Activated CD8-positive, alpha-beta T cell treated with anti-CD3 and anti-CD28 coated beads, Interleukin-2, amount 10 ng/mL, durations not matched to agents 7 days and 5 days (primary cell): ENCODE measurements at regions of chr11 and their contacts with region 1.

Region 1: DNA sequence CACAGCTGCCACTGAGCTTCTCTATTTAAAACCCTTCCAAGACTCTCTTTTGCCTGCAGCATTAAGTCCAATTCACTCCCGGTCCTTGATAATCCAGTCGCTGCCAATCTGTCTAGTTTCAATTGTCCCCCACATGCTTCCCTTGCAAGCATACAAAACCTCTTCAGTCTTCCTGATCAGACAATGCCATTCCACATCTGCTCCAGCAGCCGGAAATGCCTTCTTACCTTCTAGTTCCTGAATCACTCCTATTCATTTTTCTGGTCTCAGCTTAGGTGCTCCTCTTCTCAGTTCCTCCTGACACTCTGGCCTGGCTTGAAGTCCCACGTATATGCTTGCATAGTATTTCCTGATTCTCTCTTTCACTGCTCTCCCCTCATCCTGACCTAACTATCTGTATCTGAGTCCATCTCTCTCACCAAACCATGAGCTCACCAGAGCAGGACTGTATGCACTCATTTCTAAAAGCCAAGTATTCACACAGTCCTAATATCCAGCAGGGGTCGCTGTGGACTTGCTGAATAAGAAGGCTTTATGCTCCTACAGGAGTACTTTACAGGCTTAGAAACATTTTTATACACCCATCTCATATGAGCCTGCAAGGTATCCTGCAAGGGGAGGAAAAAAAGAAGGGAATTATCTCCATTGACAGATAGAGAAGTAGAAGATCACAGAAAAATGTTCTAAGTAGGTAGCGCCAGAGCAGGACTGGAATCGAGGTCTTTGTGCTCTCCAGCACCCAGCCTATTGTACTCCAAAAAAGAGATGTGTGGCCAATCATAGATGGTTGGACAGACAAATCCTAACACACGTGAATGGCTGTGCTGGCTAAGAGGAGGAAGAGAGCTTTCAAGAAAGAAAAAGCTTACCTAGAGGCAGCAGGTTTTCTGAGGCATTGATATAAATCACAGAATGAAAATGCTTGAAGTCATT is 19.2 kb downstream of the XRRA1 start:
- DNase-seq: peak; percentile 83
- ATAC-seq: peak; percentile 75
- H3K4me3 Mint-ChIP-seq: no peak overlapping the region
- H3K27ac Mint-ChIP-seq: no peak overlapping the region
- H3K4me1 Mint-ChIP-seq: peaks cover 48% of the 10 kb centered on the region
- H3K27me3 Mint-ChIP-seq: no peaks in the 10 kb centered on the region

Region 2: DNA sequence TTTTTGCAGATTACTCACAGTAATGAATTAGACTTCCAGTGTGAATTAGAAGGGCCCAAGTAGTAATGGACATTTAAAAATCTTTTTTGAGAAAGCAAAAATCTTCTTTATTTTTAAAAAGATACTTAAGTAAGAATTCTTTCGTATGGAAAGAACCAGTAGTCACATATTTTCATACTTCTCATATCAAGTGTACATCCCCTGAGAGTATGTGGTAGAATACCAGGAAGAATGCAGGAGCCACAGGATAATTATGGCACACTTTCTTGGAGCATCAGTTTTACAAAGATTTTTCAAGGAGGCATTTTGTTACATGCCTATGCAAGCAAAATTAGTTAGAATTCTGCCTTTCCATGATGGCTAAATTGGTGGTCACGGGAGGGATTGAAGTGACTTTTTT is 309.2 kb before region 1 on chr11:
- CTCF ChIA-PET with region 1: no interaction called
- POLR2A ChIA-PET with region 1: no interaction called
- DNase-seq: no peak
- ATAC-seq: no peak
- H3K4me3 Mint-ChIP-seq: no peak overlapping the region
- H3K27ac Mint-ChIP-seq: no peak overlapping the region
- H3K4me1 Mint-ChIP-seq: no peaks in the 10 kb centered on the region
- H3K27me3 Mint-ChIP-seq: no peaks in the 10 kb centered on the region

Region 3: GRCh38 chr11:74870485-74870884 is 59.2 kb before region 1 on chr11:
- CTCF ChIA-PET with region 1: no interaction called
- POLR2A ChIA-PET with region 1: no interaction called
- DNase-seq: no peak
- ATAC-seq: no peak
- H3K4me3 Mint-ChIP-seq: no peak overlapping the region
- H3K27ac Mint-ChIP-seq: no peak overlapping the region
- H3K4me1 Mint-ChIP-seq: no peaks in the 10 kb centered on the region
- H3K27me3 Mint-ChIP-seq: no peaks in the 10 kb centered on the region

Region 4: GRCh38 chr11:74941308-74941891 is 11.7 kb after region 1 on chr11:
- CTCF ChIA-PET with region 1: interaction called, 21 read pairs
- POLR2A ChIA-PET with region 1: no interaction called
- DNase-seq: no peak
- ATAC-seq: no peak
- H3K4me3 Mint-ChIP-seq: no peak overlapping the region
- H3K27ac Mint-ChIP-seq: no peak overlapping the region
- H3K4me1 Mint-ChIP-seq: peaks cover 3% of the 10 kb centered on the region
- H3K27me3 Mint-ChIP-seq: no peaks in the 10 kb centered on the region

Region 5: DNA sequence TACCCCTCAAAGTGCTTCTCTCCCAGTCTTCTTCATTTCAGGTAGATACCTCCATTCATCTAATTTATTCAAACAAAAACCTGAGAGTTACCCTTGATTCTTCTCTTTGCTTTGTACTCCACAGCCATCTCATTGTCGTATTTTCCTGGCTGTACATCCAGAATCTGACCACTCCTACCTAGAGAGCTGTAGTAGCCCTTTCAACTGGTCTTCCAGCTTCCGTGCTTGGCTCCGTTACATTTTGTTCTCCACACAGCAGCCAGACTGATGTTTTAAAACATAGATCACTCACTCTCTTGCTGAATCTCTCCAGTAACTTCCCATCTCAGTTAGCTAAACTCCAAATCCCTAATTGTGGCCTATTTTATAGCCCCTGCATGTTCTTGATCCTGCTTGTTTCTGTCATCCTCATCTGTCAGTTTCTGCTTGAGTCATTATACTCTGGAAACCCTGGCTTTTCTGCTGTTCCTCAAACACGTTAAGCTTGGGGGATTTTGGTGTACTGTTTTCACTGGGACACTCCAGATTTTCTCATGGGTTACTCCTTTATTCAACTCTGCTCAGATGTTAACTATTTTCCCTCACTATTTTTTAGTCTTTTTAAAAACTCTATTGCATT is 26.8 kb after region 1 on chr11:
- CTCF ChIA-PET with region 1: interaction called, 14 read pairs
- POLR2A ChIA-PET with region 1: no interaction called
- DNase-seq: no peak
- ATAC-seq: no peak
- H3K4me3 Mint-ChIP-seq: no peak overlapping the region
- H3K27ac Mint-ChIP-seq: no peak overlapping the region
- H3K4me1 Mint-ChIP-seq: peaks cover 23% of the 10 kb centered on the region
- H3K27me3 Mint-ChIP-seq: no peaks in the 10 kb centered on the region

Region 6: GRCh38 chr11:74988541-74989260 is 59.0 kb after region 1 on chr11 and contains the start of gene NEU3:
- CTCF ChIA-PET with region 1: interaction called, 11 read pairs
- POLR2A ChIA-PET with region 1: no interaction called
- DNase-seq: peak; percentile 92
- ATAC-seq: peak; percentile 98
- H3K4me3 Mint-ChIP-seq: peak within 1 kb of the TSS; percentile 94
- H3K27ac Mint-ChIP-seq: peak within 1 kb of the TSS; percentile 91
- H3K4me1 Mint-ChIP-seq: peaks cover 32% of the 10 kb centered on the region
- H3K27me3 Mint-ChIP-seq: no peaks in the 10 kb centered on the region
- total RNA-seq, gene NEU3: 15.8 to 16.7 TPM

Region 7: GRCh38 chr11:75031771-75032549 is 102.3 kb after region 1 on chr11:
- CTCF ChIA-PET with region 1: interaction called, 23 read pairs
- POLR2A ChIA-PET with region 1: no interaction called
- DNase-seq: peak; percentile 73
- ATAC-seq: peak; percentile 70
- H3K4me3 Mint-ChIP-seq: no peak overlapping the region
- H3K27ac Mint-ChIP-seq: no peak overlapping the region
- H3K4me1 Mint-ChIP-seq: peaks cover 2% of the 10 kb centered on the region
- H3K27me3 Mint-ChIP-seq: no peaks in the 10 kb centered on the region

Region 8: DNA sequence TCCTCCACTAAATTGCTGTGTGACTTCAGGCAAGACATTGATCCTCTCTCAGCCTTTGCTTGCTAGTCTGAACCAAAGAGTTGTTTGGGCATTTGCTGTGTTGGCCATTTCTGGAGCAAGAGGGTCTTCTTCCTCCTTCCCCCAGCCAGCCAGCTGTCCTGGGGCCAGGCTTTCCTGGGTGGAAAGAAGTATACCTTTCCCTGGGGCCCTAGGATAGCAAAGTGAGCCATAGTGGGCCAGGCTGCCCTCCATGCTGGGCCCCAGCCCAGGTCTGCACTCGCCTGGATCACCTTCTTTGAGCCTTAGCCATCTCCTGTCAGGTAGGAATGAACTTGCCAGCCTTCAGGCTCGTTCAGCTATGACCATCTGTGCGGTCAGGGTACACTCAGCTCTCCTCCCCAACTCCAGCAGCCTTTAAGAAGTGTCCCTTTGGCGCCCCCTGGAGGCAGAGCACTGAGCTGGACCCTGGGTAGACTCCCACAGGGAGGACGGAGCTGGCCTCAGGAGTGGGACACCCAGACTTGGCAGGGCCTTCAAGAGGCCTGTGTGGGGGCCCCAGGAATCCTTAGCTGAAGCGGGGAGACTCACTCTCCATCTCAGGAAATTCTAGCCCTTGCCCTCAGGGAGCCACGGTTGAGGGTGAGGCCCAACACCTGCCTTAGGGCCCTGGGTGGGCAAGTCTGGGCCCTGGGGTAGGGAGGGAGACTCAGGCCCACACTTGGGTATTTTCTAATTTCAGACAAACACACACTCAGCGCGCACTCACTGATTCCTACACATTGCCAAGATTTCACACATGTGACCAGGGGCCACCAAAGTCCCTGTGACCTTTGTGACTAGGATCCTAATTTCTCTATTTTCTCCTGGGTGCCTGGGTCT is 275.2 kb after region 1 on chr11:
- CTCF ChIA-PET with region 1: interaction called, 14 read pairs
- POLR2A ChIA-PET with region 1: no interaction called
- DNase-seq: peak; percentile 89
- ATAC-seq: peak; percentile 98
- H3K4me3 Mint-ChIP-seq: no peak overlapping the region
- H3K27ac Mint-ChIP-seq: no peak overlapping the region
- H3K4me1 Mint-ChIP-seq: no peaks in the 10 kb centered on the region
- H3K27me3 Mint-ChIP-seq: peaks cover 2% of the 10 kb centered on the region

Region 9: GRCh38 chr11:75248690-75249268 is 319.1 kb after region 1 on chr11:
- CTCF ChIA-PET with region 1: interaction called, 46 read pairs
- POLR2A ChIA-PET with region 1: no interaction called
- DNase-seq: peak; percentile 93
- ATAC-seq: peak; percentile 93
- H3K4me3 Mint-ChIP-seq: no peak overlapping the region
- H3K27ac Mint-ChIP-seq: no peak overlapping the region
- H3K4me1 Mint-ChIP-seq: no peaks in the 10 kb centered on the region
- H3K27me3 Mint-ChIP-seq: peaks cover 23% of the 10 kb centered on the region